GM23248 (cell line): ENCODE measurements at regions of chr18 and their contacts with region 1.

Region 1: DNA sequence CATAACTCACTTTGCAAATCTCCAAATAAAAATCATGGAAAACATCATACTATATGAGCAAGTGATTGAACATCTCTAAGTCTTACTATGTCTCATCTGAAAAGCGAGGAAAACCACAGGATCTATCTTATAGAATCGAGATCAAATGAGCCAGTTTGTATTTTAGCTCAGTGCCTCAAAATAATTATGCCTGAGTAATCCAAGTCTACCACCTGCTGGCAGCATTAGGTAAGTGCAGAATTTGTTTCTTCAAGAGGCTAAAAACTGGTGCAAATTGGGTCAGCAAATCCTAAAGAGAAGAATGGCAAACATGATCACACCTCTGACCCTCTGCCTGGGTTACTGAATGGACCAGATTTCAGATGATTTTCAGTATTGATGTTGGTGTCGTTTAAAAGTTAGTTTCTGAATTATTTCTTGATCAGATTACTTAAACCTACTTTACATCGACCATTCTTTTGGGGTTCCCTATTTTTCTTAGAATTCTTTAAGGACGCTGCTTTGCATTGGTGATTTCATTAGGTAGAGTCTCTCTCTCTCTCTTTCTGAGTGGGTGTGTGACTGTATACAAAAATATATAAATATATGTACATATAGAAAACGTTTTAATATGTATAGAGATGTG is 12.7 kb upstream of the FHOD3 start:
- DNase-seq: peak; percentile 77
- H3K4me3 ChIP-seq: no peak overlapping the region
- H3K27ac ChIP-seq: no peak overlapping the region
- H3K4me1 ChIP-seq: no peaks in the 10 kb centered on the region
- H3K27me3 ChIP-seq: no peaks in the 10 kb centered on the region

Region 2: GRCh38 chr18:35775887-35776286 is 508.9 kb before region 1 on chr18:
- in situ Hi-C with region 1: no loop called
- DNase-seq: peak; percentile 38
- H3K4me3 ChIP-seq: no peak overlapping the region
- H3K27ac ChIP-seq: no peak overlapping the region
- H3K4me1 ChIP-seq: no peaks in the 10 kb centered on the region
- H3K27me3 ChIP-seq: no peaks in the 10 kb centered on the region

Region 3: DNA sequence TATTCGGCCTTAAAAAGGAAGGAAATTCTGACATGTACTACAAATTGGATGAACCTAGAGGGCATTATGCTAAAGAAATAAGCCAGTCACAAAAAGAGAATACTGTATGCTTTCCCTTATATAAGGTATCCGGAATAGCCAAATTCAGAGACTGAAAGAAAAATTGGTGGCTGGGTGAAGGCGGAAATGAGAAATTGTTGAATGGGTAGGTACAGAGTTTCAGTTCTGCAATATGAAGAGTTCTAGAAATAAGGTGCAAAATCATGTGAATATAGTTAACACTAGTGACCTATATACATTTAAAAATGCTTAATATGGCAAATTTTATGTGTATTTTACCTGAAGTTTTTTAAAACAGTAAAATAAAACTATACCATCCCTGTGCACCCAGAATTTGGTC is 269.2 kb before region 1 on chr18:
- in situ Hi-C with region 1: loop called (anchors 10 kb)
- DNase-seq: no peak
- H3K4me3 ChIP-seq: no peak overlapping the region
- H3K27ac ChIP-seq: no peak overlapping the region
- H3K4me1 ChIP-seq: no peaks in the 10 kb centered on the region; the same call in 1 of the 2 replicates
- H3K27me3 ChIP-seq: no peaks in the 10 kb centered on the region

Region 4: GRCh38 chr18:36094431-36094830 is 190.4 kb before region 1 on chr18:
- in situ Hi-C with region 1: loop called (anchors 5 kb)
- DNase-seq: no peak
- H3K4me3 ChIP-seq: no peak overlapping the region
- H3K27ac ChIP-seq: no peak overlapping the region
- H3K4me1 ChIP-seq: no peaks in the 10 kb centered on the region
- H3K27me3 ChIP-seq: no peaks in the 10 kb centered on the region

Region 5: GRCh38 chr18:36392164-36392978 is 107.6 kb after region 1 on chr18:
- in situ Hi-C with region 1: no loop called
- DNase-seq: peak; percentile 56
- H3K4me3 ChIP-seq: no peak overlapping the region
- H3K27ac ChIP-seq: no peak overlapping the region
- H3K4me1 ChIP-seq: peaks cover 6% of the 10 kb centered on the region; the same call in 1 of the 2 replicates
- H3K27me3 ChIP-seq: no peaks in the 10 kb centered on the region